ENCODE measurements at regions of chr20 and their contacts with region 1.

Region 1: DNA sequence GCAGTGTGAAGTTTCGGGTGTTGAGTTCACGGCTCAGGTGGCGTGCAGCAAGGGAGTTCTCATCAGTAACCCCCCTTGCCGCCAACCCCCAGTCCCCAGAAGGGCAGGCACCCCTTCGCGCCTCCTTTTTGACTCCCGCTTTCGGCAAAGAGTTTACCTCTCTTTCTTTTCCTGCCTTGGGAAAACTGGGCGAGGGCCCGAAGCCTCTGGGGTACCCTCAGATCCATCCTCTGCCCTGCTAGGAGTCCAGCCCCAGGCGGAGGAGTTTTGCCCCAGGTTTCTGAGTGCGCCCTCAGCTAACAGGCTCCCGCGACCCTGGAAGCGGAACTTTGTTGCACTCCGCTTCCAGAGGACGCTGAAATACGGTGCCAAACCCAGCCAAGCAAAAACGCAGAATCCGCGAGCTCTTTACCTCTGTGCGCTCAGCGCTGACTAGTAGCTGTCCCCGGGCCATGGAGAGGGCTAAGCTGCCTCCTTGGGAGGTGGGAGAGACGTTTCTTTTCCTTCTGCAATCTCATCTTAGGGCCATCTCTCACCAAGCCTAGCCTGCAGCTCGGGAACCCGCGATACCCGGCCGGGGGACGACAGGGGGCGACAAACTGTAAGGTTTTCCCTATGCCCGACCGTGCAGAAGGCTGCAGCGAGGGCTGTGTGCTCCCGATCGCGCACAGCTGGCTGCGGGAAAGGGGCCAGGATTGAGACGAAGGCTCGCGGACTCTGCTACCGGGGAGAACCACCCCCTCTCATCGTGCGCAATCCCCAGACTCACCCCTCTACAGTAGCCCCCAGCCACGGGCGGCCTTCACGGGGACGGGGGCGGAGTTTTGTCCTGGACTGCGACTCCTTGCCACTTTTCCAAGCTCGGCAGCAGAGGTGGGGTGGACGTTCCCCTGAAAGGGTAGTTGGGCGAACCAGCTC is 2.7 kb upstream of the PAX1 start:
- DNase-seq: peak; percentile 75
- H3K4me3 Mint-ChIP-seq: no peak overlapping the region
- H3K27ac Mint-ChIP-seq: no peak overlapping the region
- H3K4me1 Mint-ChIP-seq: no peaks in the 10 kb centered on the region
- H3K27me3 Mint-ChIP-seq: peaks cover 86% of the 10 kb centered on the region

Region 2: GRCh38 chr20:20360464-20360863 is 1342.3 kb before region 1 on chr20:
- intact Hi-C with region 1: loop called (anchors 10 kb)
- DNase-seq: peak; percentile 74
- H3K4me3 Mint-ChIP-seq: no peak overlapping the region
- H3K27ac Mint-ChIP-seq: peak overlapping the region; percentile 1
- H3K4me1 Mint-ChIP-seq: peaks cover 26% of the 10 kb centered on the region
- H3K27me3 Mint-ChIP-seq: peaks cover 50% of the 10 kb centered on the region

Region 3: GRCh38 chr20:21099751-21100577 is 602.8 kb before region 1 on chr20:
- intact Hi-C with region 1: loop called (anchors 2 kb)
- DNase-seq: peak; percentile 87
- H3K4me3 Mint-ChIP-seq: peak overlapping the region; percentile 89
- H3K27ac Mint-ChIP-seq: peak overlapping the region; percentile 92
- H3K4me1 Mint-ChIP-seq: peaks cover 36% of the 10 kb centered on the region
- H3K27me3 Mint-ChIP-seq: peaks cover 79% of the 10 kb centered on the region

Region 4: GRCh38 chr20:21513881-21514540 is 188.8 kb before region 1 on chr20 and contains the start of gene NKX2-2:
- intact Hi-C with region 1: loop called (anchors 2 kb)
- DNase-seq: no peak
- H3K4me3 Mint-ChIP-seq: no peak within 1 kb of the TSS
- H3K27ac Mint-ChIP-seq: peak within 1 kb of the TSS; percentile 48
- H3K4me1 Mint-ChIP-seq: peaks cover 25% of the 10 kb centered on the region
- H3K27me3 Mint-ChIP-seq: peaks cover 74% of the 10 kb centered on the region
- total RNA-seq, gene NKX2-2: not detected in 2 replicates

Region 5: GRCh38 chr20:22567944-22568871 is 865.4 kb after region 1 on chr20:
- intact Hi-C with region 1: loop called (anchors 5 kb)
- DNase-seq: no peak
- H3K4me3 Mint-ChIP-seq: no peak overlapping the region
- H3K27ac Mint-ChIP-seq: no peak overlapping the region
- H3K4me1 Mint-ChIP-seq: no peaks in the 10 kb centered on the region
- H3K27me3 Mint-ChIP-seq: peaks cover 75% of the 10 kb centered on the region

Region 6: DNA sequence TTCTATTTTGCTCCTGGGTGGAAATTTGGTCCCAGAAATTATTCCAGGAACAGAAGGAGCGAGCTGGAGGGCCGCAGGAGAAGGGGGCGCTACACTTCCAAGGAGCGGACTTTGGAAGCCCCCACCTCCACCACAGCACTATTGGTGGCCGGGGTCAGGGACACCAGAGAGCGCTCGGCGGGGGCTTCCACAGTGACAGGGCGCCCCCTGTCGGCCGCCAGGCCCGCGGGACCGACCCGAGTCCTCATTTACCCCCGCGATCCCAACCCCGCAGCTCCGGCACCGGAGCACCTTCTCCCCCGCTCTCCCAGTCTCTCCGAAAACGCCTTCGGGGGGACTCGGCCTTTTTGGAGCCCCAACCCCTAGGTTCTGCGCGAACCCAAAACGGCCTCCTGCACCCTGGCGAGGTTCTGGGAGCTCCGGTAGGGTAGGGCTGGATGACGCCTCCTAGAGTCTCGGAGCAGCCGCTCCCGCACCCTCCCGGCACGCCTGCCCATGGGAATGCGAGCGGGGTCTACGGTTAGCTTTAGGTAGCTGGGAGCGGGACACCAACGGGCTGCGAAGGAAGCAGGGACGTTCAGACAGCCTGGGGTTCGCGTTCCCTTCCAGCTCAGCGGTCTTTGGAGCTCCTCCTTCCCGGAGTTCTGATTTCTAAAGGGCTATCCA is 884.0 kb after region 1 on chr20:
- intact Hi-C with region 1: loop called (anchors 5 kb)
- DNase-seq: peak; percentile 68
- H3K4me3 Mint-ChIP-seq: no peak overlapping the region
- H3K27ac Mint-ChIP-seq: no peak overlapping the region
- H3K4me1 Mint-ChIP-seq: no peaks in the 10 kb centered on the region
- H3K27me3 Mint-ChIP-seq: peaks cover 55% of the 10 kb centered on the region

Measured in activated CD4-positive, alpha-beta T cell treated with anti-CD3 and anti-CD28 coated beads, Interleukin-2, amount 10 ng/mL, durations not matched to agents 24 days and 14 days (primary cell).